ENCODE measurements at regions of chr12 and their contacts with region 1.

Region 1: DNA sequence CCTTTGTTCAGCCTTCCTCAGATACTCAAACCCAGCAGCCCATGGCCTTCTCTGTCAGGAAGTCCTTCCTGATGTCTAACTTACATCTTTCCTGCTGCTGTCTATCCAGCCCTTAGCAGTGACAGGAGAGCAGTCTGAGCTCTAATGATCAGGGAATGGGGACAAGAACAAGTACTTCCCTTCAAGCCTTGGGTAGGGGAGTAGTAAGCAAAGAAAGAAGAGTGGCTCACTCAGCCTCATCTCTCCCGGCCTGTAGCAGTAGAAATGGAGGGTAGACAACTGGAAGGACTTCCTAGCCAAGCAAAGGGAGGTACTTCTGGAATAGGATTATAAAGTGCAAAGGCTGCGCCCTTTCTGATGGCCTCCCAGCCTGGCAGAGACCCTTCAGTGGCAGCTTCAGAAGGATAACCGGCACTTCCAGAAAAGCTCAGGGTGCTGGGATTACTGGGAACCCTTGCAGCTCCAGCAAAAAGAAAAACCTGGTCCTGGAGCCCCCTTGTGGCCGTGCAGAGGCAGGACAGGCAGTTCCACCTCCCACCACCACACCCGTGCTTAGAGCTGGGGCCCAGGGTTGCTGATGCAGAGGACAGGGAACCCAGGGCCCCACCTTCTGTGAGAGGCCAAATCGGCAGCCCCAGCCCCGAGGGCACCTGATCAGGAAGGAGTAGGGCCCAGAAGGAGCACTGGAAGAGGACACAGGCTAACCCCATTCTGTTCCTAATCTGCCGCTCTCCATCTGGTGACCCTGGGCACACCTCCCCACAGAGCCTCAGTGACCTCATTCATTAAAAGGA is 12.4 kb upstream of the SMUG1 start:
- DNase-seq: peak; percentile 83
- CTCF ChIP-seq: peak; percentile 78

Region 2: GRCh38 chr12:53984901-53985709 is 216.1 kb before region 1 on chr12 and contains the start of gene HOXC10:
- CTCF ChIA-PET with region 1: interaction called, 74 read pairs
- POLR2A ChIA-PET with region 1: no interaction called
- DNase-seq: peak; percentile 87
- CTCF ChIP-seq: peak; percentile 71

Region 3: GRCh38 chr12:54005853-54006686 is 195.1 kb before region 1 on chr12:
- CTCF ChIA-PET with region 1: interaction called, 139 read pairs
- POLR2A ChIA-PET with region 1: no interaction called
- DNase-seq: peak; percentile 82
- CTCF ChIP-seq: peak; percentile 94

Region 4: GRCh38 chr12:54017878-54018467 is 183.2 kb before region 1 on chr12:
- CTCF ChIA-PET with region 1: interaction called, 27 read pairs
- POLR2A ChIA-PET with region 1: no interaction called
- DNase-seq: peak; percentile 94
- CTCF ChIP-seq: no peak

Region 5: DNA sequence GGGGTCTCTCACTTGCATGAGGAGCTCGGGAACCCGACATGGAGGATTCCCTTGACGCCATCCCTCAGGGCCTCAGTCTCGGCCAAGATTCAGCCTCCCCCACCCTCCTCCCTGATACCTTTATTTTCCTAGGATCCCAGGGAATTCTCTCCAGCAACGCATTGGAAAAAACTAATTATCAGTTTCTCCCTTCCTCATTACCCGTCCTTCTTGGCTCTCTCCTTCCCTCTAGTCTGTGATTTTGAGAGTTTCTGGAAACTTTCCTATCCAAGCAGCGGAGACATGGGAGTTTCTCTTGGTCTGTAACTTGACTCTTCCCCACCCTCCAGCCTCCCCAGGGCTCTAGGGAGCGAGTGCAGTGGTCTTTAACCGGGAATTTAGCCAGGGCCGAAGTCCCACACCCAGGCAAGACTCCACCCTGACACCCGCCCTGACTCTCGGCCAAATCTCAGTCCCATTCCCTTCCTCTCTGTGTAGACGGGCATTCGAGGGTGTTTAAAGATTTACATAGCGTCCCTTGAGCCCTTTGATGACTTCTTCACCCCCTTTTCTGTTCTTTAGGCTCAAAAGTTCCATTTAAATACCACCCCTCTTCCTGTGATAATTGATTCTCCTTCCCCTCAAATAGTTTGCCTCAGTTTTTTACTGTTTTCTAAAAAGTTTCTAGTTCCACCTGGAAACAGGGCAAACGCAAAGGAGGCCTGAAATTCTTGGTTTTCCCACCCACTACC is 161.6 kb before region 1 on chr12:
- CTCF ChIA-PET with region 1: interaction called, 139 read pairs
- POLR2A ChIA-PET with region 1: no interaction called
- DNase-seq: no peak
- CTCF ChIP-seq: no peak

Region 6: GRCh38 chr12:54053751-54054741 is 147.2 kb before region 1 on chr12 and contains the start of gene HOXC4:
- CTCF ChIA-PET with region 1: interaction called, 12 read pairs
- POLR2A ChIA-PET with region 1: interaction called, 4 read pairs
- DNase-seq: peak; percentile 78
- CTCF ChIP-seq: no peak

Region 7: DNA sequence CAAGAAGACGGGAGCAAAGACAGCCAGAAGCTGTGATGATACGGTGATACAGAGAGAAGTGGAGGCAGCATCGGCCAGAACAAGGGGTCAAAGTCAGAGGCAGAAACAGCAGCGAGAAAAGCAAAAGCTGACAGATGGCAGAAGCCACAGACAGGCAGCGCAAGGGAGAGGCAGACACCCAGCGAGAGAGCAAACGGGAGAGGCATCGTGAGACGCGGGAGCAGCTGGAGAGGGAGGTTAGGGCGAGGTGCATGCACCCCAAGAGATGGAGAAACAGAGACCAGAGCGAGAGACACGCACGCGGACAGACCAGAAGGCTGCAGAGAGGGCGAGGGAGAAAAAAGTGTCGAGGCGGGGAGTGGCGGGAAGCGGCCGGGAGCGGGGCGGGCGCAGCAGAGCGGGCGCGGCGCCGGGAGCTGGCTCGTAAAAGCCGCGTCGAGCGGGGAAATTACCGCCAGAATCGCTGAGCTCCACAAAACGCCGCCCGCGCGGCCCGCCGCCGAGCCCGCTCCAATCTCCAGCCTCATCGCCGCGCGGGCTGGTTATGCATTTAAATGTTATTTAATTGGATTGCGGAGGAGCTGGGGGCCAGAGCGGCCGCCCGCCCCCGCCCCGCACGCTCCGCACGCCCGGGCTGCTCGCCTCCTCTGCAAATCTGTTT is 28.0 kb before region 1 on chr12:
- CTCF ChIA-PET with region 1: interaction called, 19 read pairs
- POLR2A ChIA-PET with region 1: no interaction called
- DNase-seq: peak; percentile 40
- CTCF ChIP-seq: no peak

Region 8: GRCh38 chr12:54238531-54238930 is 37.3 kb after region 1 on chr12:
- CTCF ChIA-PET with region 1: no interaction called
- POLR2A ChIA-PET with region 1: no interaction called
- DNase-seq: no peak
- CTCF ChIP-seq: no peak

Region 9: DNA sequence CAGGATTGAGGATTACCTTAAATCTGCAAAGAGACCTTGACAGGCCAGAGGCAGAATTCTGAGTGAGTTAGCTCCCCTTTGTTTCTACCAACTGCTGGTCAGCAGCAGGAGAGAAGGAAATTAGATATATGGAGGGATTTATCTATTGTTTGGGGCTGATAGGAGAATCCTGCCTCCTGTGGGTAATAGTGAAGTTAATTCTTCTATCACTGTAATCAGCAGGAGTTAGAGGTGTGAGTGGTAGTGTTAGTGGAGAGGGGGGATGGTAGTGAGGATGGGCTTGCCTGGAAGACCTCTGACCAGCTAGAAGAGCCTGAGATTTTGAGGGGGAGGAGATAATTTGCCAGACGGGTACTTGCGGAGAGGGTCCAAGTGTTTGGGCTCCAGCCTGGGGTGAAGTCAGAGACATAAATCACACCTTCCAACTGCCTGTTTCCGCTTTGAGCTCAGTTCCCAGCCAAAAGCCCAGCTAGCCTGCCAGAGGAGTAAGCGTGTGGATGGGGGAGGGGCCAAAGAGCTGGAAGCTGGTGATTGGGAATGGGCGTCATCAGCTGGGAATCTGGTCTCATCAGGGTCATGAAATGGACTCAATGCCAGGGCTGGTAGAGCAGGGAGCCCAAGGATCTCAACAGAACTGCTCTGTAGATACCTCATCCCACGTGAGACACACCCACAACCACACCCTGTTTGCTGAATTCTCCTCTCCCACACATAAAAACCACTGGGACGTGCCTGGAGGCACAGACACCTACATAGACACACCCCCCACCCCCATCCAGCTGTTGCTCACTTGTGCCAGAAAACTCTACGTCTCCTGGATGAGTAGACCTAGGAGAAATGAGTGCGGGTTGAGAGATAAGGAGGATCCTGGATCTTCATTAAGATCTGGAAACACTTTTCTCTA is 231.0 kb after region 1 on chr12:
- CTCF ChIA-PET with region 1: no interaction called
- POLR2A ChIA-PET with region 1: no interaction called
- DNase-seq: no peak
- CTCF ChIP-seq: no peak